ENCODE measurements at regions of chr20 and their contacts with region 1.

Region 1: GRCh38 chr20:62875419-62876361 is 14.1 kb upstream of the TCFL5 start:
- DNase-seq: peak; percentile 79 to 80
- ATAC-seq: peak; percentile 77 to 93 (median 85)
- H3K4me3 ChIP-seq: peak overlapping the region in 5 of 10 donors; percentile 8 to 35 (median 21)
- H3K27ac ChIP-seq: peak overlapping the region; percentile 7 to 90 (median 76)
- H3K4me1 ChIP-seq: peaks cover 14 to 33% (median 24%) of the 10 kb centered on the region in 9 donors
- H3K27me3 ChIP-seq: peaks cover 0 to 6% (median 0%) of the 10 kb centered on the region in 7 donors
- CTCF ChIP-seq: peak in 7 of 9 donors; percentile 29 to 62 (median 41)

Region 2: DNA sequence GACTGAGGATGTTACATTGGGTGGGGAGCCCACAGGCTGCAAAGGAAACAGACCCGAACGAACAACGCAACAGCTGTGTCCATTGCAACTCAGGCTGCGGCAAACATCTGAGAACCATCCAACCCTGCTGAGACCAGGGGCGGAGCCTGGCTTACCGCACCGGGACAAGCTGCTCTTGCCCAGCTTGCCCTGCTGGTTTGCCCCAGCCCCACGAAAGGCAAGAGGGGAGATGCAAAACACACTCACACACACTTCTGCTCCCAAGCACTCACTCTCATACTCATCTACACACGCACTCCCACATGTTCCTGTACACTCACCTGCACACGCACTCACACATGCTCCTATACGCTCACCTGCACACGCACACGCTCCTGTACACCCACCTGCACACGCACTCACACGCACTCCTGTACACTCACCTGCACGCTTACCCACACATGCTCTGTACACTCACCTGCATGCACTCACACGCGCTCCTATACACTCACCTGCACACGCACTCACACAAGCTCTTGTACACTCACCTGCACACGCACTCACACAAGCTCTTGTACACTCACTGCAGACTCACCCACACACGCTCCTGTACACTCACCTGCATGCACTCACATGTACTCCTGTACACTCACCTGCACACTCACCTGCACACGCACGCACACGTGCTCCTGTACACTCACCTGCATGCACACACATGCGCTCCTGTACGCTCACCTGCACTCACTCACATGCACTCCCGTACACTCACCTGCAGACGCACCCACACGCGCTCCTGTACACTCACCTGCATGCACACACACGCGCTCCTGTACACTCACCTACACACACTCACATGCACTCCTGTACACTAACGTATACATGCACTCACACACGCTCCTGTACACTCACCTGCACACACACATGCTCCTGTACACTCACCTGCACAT is 788.1 kb before region 1 on chr20:
- intact Hi-C with region 1: no loop called
- DNase-seq: no peak
- ATAC-seq: peak in 1 of 8 donors; percentile 41
- H3K4me3 ChIP-seq: no peak overlapping the region
- H3K27ac ChIP-seq: no peak overlapping the region
- H3K4me1 ChIP-seq: no peaks in the 10 kb centered on the region
- H3K27me3 ChIP-seq: peaks cover 0 to 17% (median 0%) of the 10 kb centered on the region in 7 donors
- CTCF ChIP-seq: no peak

Region 3: DNA sequence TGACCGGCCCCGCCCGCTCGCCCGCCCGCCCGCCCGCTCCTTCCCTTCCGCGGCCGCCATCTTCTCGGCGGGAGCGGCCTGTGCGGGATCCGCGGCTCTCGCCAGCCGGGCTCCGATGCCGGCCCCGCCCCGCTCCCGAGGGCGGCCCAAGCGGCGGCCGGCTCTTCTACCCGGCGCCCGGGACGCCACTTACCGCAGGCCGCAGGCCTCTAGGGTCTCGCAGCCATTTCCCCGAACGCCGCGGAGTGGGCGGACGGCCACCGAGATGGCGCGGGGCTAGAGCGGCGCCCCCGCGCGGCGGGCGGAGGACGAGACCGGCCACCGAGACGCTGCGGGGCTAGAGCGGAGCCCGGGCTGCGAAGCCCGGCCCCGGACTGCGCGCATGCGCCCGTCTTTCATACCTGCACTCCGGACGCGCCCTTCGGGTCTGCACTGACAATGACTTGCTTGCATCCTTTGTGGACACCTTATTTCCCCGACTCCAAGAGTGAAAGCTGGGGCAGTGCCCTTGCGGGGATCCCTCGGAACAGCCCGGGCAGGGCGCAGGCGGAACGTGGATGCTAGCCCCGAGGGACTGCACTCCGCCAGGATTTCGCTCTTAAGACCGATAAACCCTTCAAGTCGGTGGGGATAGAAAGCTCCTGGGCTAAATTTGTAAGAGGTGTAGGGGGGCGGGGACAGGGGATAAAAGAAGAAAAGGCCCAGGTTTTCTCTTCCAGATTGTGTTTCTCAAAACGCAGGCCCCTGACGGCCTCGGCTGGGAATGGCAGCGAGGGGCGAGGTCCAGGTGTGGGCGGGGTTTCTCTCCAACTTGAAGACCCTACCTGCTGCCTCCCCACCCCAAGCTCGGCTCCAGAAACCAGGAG is 50.8 kb after region 1 on chr20 and contains the start of gene DIDO1:
- intact Hi-C with region 1: loop called in 2 of 10 experiments (anchors 5 to 10 kb)
- DNase-seq: peak; percentile 84 to 92
- ATAC-seq: peak; percentile 86 to 94 (median 91)
- H3K4me3 ChIP-seq: peak within 1 kb of the TSS; percentile 67 to 99 (median 98)
- H3K27ac ChIP-seq: peak within 1 kb of the TSS; percentile 89 to 99 (median 98)
- H3K4me1 ChIP-seq: peaks cover 24 to 78% (median 69%) of the 10 kb centered on the region in 9 donors
- H3K27me3 ChIP-seq: no peaks in the 10 kb centered on the region
- CTCF ChIP-seq: peak; percentile 54 to 94 (median 85)
- total RNA-seq, gene DIDO1: 31.4 to 44.6 (median 37.6) TPM

Measured in heart right ventricle (tissue), 16 donors.